ENCODE measurements at regions of chr1 and their contacts with region 1.

Region 1: GRCh38 chr1:16187748-16188401 is 24.6 kb downstream of the ARHGEF19 start:
- DNase-seq: peak; percentile 71 to 92 (median 78)
- ATAC-seq: peak; percentile 81
- H3K4me3 ChIP-seq: no peak overlapping the region
- H3K27ac ChIP-seq: no peak overlapping the region
- H3K4me1 ChIP-seq: peaks cover 6 to 11% of the 10 kb centered on the region in 2 donors
- H3K27me3 ChIP-seq: no peaks in the 10 kb centered on the region
- CTCF ChIP-seq: peak; percentile 94

Region 2: GRCh38 chr1:16078925-16079656 is 108.8 kb before region 1 on chr1:
- intact Hi-C with region 1: loop called (anchors 2 to 10 kb)
- DNase-seq: peak in 3 of 4 donors; percentile 65 to 81 (median 76)
- ATAC-seq: peak; percentile 85
- H3K4me3 ChIP-seq: no peak overlapping the region
- H3K27ac ChIP-seq: no peak overlapping the region
- H3K4me1 ChIP-seq: peaks cover 0 to 6% of the 10 kb centered on the region in 2 donors
- H3K27me3 ChIP-seq: peaks cover 0 to 10% of the 10 kb centered on the region in 2 donors
- CTCF ChIP-seq: peak; percentile 68 to 73

Region 3: GRCh38 chr1:16243936-16244649 is 56.2 kb after region 1 on chr1:
- intact Hi-C with region 1: loop called in 1 of 2 experiments (anchors 5 kb)
- DNase-seq: peak in 2 of 4 donors; percentile 62 to 82
- ATAC-seq: peak; percentile 86
- H3K4me3 ChIP-seq: no peak overlapping the region
- H3K27ac ChIP-seq: no peak overlapping the region
- H3K4me1 ChIP-seq: peaks cover 14 to 19% of the 10 kb centered on the region in 2 donors
- H3K27me3 ChIP-seq: no peaks in the 10 kb centered on the region
- CTCF ChIP-seq: peak; percentile 74 to 75